HEK293 (cell line): ENCODE measurements at regions of chr9 and their contacts with region 1.

Region 1: DNA sequence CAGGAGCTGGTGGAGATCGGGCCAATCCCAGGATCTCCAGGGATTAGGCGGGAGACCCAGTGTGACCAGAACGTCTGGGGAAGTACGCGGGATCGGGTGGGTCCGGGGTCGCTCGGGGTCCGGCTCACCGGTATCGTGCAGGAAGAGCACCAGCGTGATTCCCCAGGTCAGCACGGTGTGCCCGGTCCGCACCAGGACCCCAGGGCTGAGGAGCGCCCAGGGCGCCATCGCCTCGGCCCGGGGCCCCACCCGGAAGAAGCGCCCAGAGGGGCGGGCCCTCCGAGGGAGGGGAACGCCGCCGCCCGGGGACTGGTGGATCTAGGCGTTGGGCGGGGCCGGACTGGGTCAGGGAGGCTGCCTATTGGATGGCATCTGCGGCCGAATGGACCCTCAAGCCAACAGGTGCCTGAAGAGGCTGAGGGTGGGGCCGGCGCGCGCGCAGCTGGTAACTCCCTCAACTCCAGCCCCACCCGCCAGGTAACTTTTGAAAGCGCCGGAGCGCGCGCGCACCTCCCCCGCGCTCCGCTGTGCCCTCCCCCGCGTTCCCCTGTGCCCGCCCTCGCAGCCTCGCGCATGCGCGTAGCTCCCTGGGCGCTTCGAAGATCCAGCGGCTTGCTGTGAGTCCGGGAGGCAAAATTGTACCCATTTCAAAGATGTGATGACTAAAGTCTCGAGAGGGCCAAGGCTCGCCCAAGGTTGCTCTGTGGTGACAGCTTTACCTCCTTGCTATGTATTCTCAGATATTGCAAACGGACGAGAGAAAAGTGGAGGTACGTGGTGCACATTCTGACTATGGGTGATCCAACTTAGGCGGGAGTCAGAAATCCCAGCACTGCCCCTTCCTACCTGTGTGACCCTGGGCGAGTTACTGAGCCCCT is at the start of gene ZDHHC12:
- H3K4me3 ChIP-seq: peak within 1 kb of the TSS; percentile 91
- H3K27ac ChIP-seq: peak within 1 kb of the TSS; percentile 40
- H3K4me1 ChIP-seq: no peaks in the 10 kb centered on the region
- CTCF ChIP-seq: no peak; the same call in 1 of the 2 replicates

Region 2: DNA sequence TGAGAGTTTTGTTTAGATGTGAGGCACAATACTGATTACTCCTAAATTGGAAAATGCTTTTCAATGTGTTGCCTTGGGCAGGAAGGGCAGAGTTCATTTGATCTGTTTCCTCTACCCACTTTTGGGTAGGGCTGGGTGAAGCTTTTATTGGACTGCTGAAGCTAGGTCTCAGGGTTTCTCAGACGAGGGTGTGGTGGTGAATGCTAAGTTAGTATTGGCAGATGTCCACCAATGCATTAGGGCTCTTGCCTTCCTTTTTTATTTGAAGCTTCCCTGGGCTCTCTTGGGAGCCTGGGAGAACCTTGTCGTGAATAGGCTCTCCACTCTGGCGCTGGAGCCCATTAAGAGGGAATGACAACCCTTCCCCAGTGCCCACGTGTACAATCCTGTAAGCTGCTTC is 148.6 kb before region 1 on chr9:
- CTCF ChIA-PET with region 1: no interaction called
- POLR2A ChIA-PET with region 1: no interaction called
- H3K4me3 ChIP-seq: no peak overlapping the region
- H3K27ac ChIP-seq: no peak overlapping the region
- H3K4me1 ChIP-seq: no peaks in the 10 kb centered on the region
- CTCF ChIP-seq: no peak

Region 3: GRCh38 chr9:128677794-128678193 is 46.3 kb before region 1 on chr9:
- CTCF ChIA-PET with region 1: no interaction called
- POLR2A ChIA-PET with region 1: no interaction called
- H3K4me3 ChIP-seq: no peak overlapping the region
- H3K27ac ChIP-seq: no peak overlapping the region
- H3K4me1 ChIP-seq: no peaks in the 10 kb centered on the region
- CTCF ChIP-seq: no peak

Region 4: DNA sequence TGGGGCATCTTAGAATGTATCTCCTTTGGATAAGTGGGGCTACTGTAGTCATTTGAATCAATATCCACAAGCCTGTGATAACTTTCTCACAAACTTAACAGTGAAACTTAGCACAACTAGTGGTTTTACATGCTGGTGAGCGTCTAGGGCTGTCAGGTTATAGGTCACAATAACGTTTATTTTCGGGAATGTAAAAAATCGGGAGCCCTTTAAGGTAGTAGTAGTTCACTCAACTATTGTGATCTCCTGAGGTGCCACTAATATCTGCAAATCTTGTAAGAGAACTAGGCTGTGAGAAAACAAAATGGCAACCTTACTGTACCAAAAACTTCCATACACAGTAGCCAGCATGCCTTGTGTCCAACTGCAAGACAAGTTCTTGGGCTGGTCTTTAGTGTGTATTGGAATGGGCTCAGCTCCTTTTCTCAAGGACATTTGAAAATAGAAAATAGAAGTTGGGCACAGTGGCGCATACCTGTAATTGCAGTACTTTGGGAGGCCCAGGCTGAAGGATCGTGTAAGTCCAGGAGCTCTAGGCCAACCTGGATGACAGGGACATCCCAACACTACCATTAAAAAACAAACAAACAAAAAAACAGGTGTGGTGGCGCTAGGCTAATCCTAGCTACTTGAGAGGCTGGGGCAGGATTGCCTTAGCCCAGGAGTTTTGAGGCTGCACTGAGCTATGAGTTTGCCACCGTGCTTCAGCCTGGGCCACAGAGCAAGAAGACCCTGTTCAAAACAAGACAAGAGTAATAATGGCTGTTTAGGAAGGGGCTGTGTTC is 27.0 kb before region 1 on chr9:
- CTCF ChIA-PET with region 1: interaction called, 8 read pairs
- POLR2A ChIA-PET with region 1: interaction called, 15 read pairs
- H3K4me3 ChIP-seq: no peak overlapping the region
- H3K27ac ChIP-seq: no peak overlapping the region
- H3K4me1 ChIP-seq: no peaks in the 10 kb centered on the region
- CTCF ChIP-seq: no peak

Region 5: DNA sequence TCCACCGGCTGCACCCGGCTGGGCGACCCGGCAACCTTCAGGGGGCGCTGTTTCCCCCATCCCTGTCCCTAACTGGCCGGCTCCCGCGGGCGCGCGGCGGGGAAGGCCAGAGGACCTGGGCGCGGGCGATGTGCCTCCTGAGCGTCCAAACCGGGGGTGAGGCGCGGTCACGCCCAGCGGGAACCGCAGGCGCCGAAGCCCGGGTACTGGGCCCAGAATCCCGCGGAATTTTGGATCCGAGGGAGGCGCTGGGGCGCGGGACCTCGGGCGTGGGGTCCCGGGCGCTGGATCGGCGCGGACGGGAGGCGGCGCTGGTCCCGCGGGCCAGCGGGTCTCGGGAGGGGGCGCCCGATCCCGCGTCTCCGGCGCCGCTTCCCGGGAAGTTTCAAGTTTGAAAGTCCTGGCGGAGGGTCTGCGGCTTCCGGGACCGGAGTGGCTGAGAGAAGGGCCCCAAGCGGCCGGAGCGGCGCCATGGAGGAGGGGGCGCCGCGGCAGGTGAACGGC is 21.6 kb before region 1 on chr9 and contains the start of gene PKN3:
- CTCF ChIA-PET with region 1: interaction called, 8 read pairs
- POLR2A ChIA-PET with region 1: interaction called, 22 read pairs
- H3K4me3 ChIP-seq: peak within 1 kb of the TSS; percentile 79
- H3K27ac ChIP-seq: peak within 1 kb of the TSS; percentile 80
- H3K4me1 ChIP-seq: no peaks in the 10 kb centered on the region
- CTCF ChIP-seq: peak; percentile 94

Region 6: DNA sequence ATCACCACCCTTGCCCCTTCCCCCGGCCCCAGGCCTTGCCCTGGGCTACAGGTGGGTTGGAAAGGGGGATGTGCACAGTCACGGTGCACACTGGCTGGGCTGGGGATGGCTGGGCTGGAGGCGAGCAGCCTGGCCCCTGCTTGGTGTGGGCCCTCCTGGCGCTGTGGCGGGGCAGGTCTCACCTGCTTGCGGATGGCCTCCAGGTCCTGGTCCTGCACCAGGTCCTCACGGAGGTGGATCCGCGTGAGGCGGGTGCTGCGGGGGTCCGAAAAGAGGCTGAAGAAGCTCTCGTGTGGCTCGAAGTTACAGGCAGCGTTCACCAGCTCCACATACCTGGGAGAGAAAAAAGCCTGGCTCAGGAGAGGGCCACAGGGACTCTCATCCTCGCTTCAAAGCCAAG is 29.5 kb after region 1 on chr9:
- CTCF ChIA-PET with region 1: no interaction called
- POLR2A ChIA-PET with region 1: no interaction called
- H3K4me3 ChIP-seq: no peak overlapping the region
- H3K27ac ChIP-seq: no peak overlapping the region
- H3K4me1 ChIP-seq: no peaks in the 10 kb centered on the region
- CTCF ChIP-seq: no peak

Region 7: GRCh38 chr9:128829477-128830251 is 105.6 kb after region 1 on chr9 and contains the start of gene SPOUT1:
- CTCF ChIA-PET with region 1: no interaction called
- POLR2A ChIA-PET with region 1: interaction called, 12 read pairs
- H3K4me3 ChIP-seq: peak within 1 kb of the TSS; percentile 86
- H3K27ac ChIP-seq: peak within 1 kb of the TSS; percentile 63; the same call in 1 of the 2 replicates
- H3K4me1 ChIP-seq: no peaks in the 10 kb centered on the region
- CTCF ChIP-seq: no peak; the same call in 1 of the 2 replicates